ENCODE measurements at regions of chr11 and their contacts with region 1.

Region 1: GRCh38 chr11:64778508-64779346 is at the start of gene SF1:
- DNase-seq: peak; percentile 100
- ATAC-seq: peak; percentile 82
- H3K4me3 ChIP-seq: peak within 1 kb of the TSS; percentile 79 to 92 (median 82)
- H3K4me3 Mint-ChIP-seq: peak within 1 kb of the TSS; percentile 95
- H3K27ac ChIP-seq: peak within 1 kb of the TSS; percentile 95 to 98
- H3K27ac Mint-ChIP-seq: peak within 1 kb of the TSS; percentile 99
- H3K4me1 ChIP-seq: peaks cover 60 to 71% of the 10 kb centered on the region in 2 donors
- H3K4me1 Mint-ChIP-seq: peaks cover 73% of the 10 kb centered on the region
- H3K27me3 ChIP-seq: no peaks in the 10 kb centered on the region
- H3K27me3 Mint-ChIP-seq: no peaks in the 10 kb centered on the region
- CTCF ChIP-seq: no peak
- total RNA-seq, gene SF1: 914 and 931 TPM in 2 replicates

Region 2: DNA sequence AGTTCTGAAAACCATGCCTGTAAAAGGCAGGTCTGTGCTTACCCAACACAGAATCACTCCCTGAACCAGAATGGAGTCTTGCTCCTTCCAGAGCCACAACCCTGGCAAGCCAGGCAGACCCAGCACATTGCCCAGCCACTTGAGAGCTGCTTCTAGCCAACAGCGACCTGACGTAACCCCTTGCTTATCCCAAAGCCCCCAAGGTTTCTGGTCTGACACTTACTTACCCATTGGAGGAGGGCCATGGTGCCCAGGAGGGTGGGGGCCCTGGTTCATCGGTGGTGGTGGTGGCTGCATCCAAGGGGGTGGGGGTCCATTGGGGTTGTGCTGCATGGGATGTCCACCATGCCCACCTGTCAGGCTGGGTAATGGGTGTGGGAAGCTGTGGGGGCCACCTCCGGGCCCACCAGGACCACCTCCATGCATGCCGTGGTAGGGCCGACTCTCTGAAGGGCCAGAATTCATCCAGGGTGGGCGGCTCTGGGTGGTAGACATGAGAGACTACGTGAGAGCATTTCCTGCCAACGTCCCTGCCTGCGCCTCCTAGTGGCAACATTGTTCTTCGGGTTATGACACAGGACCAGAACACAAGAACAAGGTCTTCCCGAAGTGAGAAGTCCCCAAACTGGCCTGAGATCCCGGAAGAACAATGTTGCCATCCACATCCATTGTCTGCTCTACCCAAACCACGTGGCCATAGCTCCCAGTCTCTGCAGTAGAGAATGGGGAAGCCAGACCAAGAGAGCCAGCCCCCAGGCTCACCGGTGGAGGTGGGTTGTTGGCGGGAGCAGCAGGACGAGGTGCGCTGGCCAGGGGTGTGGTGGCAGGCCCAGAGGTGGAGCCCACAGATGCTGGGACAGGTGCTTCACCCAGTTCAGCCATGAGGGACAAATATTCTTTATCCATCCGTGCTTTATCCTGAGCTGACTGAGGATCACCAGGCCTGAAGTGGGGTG is 11.1 kb before region 1 on chr11:
- CTCF ChIA-PET with region 1: interaction called, 20 read pairs
- POLR2A ChIA-PET with region 1: interaction called, 48 read pairs
- intact Hi-C with region 1: loop called (anchors 2 kb)
- DNase-seq: peak; percentile 82
- ATAC-seq: no peak
- H3K4me3 ChIP-seq: no peak overlapping the region
- H3K4me3 Mint-ChIP-seq: peak overlapping the region; percentile 66
- H3K27ac ChIP-seq: peak overlapping the region; percentile 64 to 75
- H3K27ac Mint-ChIP-seq: peak overlapping the region; percentile 92
- H3K4me1 ChIP-seq: peaks cover 85 to 96% of the 10 kb centered on the region in 2 donors
- H3K4me1 Mint-ChIP-seq: peaks cover 91% of the 10 kb centered on the region
- H3K27me3 ChIP-seq: no peaks in the 10 kb centered on the region
- H3K27me3 Mint-ChIP-seq: no peaks in the 10 kb centered on the region
- CTCF ChIP-seq: peak; percentile 90

Region 3: GRCh38 chr11:64803163-64803845 is 24.6 kb after region 1 on chr11 and contains the start of gene MAP4K2:
- CTCF ChIA-PET with region 1: interaction called, 73 read pairs
- POLR2A ChIA-PET with region 1: interaction called, 25 read pairs
- intact Hi-C with region 1: loop called (anchors 1 kb)
- DNase-seq: peak; percentile 90
- ATAC-seq: peak; percentile 83
- H3K4me3 ChIP-seq: peak within 1 kb of the TSS; percentile 66 to 96 (median 71)
- H3K4me3 Mint-ChIP-seq: peak within 1 kb of the TSS; percentile 90
- H3K27ac ChIP-seq: peak within 1 kb of the TSS; percentile 74 to 90
- H3K27ac Mint-ChIP-seq: peak within 1 kb of the TSS; percentile 92
- H3K4me1 ChIP-seq: peaks cover 46 to 54% of the 10 kb centered on the region in 2 donors
- H3K4me1 Mint-ChIP-seq: peaks cover 45% of the 10 kb centered on the region
- H3K27me3 ChIP-seq: no peaks in the 10 kb centered on the region
- H3K27me3 Mint-ChIP-seq: no peaks in the 10 kb centered on the region
- CTCF ChIP-seq: no peak
- total RNA-seq, gene MAP4K2: 118 and 122 TPM in 2 replicates

Region 4: DNA sequence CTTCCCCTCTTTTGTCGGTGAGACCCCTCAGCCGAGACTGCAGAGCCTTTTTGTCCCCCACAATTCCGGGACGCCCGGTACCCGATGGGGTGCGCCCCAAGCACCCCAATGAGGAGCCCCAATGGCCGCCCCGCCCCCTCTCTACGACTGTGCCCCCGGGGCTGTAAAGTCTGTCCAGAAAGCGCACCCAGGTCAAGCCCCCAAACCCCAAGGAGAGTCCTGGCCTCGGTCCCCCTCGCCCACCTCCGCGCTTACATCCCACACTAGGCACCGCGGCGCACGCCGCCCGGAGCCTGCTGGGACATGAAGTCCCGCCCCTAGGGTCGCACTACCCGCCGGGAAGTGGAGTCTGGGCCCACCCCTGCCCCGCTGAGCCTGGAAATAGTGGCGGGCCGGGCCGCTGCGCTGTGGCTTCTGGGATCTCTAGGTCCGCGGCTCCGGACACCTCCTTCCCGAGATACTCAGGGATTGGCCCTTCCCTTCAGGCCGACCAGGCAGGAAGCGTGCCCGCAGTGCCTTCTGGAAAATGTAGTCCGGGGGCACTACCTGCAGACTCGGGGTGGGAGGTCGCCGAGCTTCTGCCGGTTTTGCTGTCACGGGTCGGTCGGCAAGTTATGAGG is 31.7 kb after region 1 on chr11 and contains the start of gene MEN1:
- CTCF ChIA-PET with region 1: interaction called, 7 read pairs
- POLR2A ChIA-PET with region 1: interaction called, 10 read pairs
- intact Hi-C with region 1: loop called (anchors 1 kb)
- DNase-seq: peak; percentile 82
- ATAC-seq: peak; percentile 84
- H3K4me3 ChIP-seq: peak within 1 kb of the TSS; percentile 36 to 99 (median 86)
- H3K4me3 Mint-ChIP-seq: peak within 1 kb of the TSS; percentile 98
- H3K27ac ChIP-seq: peak within 1 kb of the TSS; percentile 63 to 79
- H3K27ac Mint-ChIP-seq: peak within 1 kb of the TSS; percentile 95
- H3K4me1 ChIP-seq: peaks cover 15 to 32% of the 10 kb centered on the region in 2 donors
- H3K4me1 Mint-ChIP-seq: peaks cover 34% of the 10 kb centered on the region
- H3K27me3 ChIP-seq: no peaks in the 10 kb centered on the region
- H3K27me3 Mint-ChIP-seq: no peaks in the 10 kb centered on the region
- CTCF ChIP-seq: no peak
- total RNA-seq, gene MEN1: 46.3 and 48.2 TPM in 2 replicates